ENCODE measurements at regions of chr11 and their contacts with region 1.

Region 1: DNA sequence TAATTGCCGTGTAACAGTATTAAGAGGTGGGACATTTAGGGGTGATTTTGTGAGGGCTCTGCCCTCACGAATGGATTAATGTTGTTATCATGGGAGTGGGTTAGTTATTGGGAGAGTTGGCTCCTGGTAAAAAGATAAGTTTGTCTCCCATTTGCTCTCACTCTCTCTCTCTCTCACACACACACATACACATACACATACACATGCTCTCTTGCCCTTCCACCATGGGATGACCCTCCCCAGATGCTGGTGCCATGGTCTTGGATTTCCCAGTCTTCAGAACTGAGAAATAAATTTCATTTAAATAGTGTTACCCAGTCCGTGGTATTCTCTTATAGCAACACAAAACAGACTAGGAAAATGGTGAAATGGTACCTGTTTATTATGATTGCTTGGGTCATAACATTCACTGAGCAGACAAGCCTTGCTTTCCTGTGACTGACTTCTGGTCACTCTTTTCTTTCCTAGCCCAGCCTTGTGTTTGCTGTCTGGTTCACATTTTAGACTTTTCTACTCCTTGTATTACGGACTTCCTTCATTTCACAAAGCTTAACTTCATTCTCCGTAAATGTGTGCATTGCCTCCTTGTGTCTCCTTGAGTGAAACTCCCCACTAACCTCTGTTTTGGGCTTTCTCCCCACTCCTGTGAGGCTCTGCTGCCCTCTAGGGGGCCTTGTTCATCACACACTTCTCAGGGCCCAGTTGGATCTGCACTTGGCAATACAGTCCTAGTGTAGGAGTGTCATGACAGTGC is 206.5 kb upstream of the CTSC start:
- DNase-seq: peak; percentile 63 to 86
- H3K4me3 ChIP-seq: no peak overlapping the region
- H3K27ac ChIP-seq: no peak overlapping the region
- H3K4me1 ChIP-seq: peaks cover 0 to 3% (median 0%) of the 10 kb centered on the region in 4 experiments; a peak in 2 of 7 replicates
- H3K27me3 ChIP-seq: no peaks in the 10 kb centered on the region
- CTCF ChIP-seq: peak; percentile 78 to 99 (median 98)
- EP300 ChIP-seq: no peak
- POLR2A ChIP-seq: no peak
- RAD21 ChIP-seq: peak; percentile 100

Region 2: DNA sequence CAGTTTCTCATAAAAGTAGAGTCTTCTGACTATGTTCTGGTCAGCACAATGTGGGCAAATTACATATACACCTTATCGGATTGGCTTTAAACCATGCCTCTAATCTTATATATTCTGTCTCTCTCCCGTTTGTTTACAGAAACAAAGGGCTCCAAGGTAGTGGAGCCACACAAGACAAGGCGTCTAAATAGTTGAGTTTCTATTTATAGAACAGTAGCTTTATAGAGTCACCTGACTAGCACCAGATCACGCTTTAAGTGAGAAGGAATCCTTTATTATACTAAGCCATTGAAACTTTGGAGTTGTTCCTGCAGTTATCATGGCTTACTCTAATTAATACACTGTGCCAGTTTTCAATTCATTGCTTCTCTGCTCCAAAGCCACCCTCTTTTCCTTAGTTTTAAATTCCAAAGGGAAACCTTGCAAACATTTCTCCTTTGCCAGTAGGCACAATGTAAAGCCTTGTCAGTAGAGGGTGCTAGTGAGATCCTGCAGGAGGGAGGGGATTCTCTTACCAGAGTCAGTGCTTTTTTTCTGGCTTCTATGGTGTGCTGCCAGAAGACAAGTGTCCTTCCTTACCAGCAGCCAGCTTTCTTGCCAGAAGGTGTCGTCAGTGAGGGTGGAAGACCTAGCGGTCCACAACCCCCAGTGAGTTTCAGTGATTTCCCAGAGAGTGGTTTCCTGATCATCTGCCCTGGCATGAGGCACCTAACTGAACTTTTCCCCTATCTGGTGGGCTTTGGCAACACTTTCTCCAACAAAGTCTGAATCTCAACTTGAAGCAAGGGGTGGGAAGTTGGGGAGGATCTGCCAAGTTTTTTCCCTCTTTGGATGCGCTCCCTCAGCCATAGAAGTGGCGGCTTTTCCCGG is 440.5 kb before region 1 on chr11:
- CTCF ChIA-PET with region 1: interaction called, 23 read pairs
- POLR2A ChIA-PET with region 1: no interaction called
- DNase-seq: peak; percentile 63 to 65
- H3K4me3 ChIP-seq: no peak overlapping the region
- H3K27ac ChIP-seq: no peak overlapping the region
- H3K4me1 ChIP-seq: peaks cover 0 to 5% (median 0%) of the 10 kb centered on the region in 4 experiments; a peak in 2 of 7 replicates
- H3K27me3 ChIP-seq: no peaks in the 10 kb centered on the region
- CTCF ChIP-seq: peak; percentile 71 to 99 (median 95)
- EP300 ChIP-seq: no peak
- POLR2A ChIP-seq: no peak
- RAD21 ChIP-seq: peak; percentile 82 to 83

Region 3: GRCh38 chr11:88320149-88320559 is 223.9 kb before region 1 on chr11:
- CTCF ChIA-PET with region 1: no interaction called
- POLR2A ChIA-PET with region 1: no interaction called
- DNase-seq: no peak
- H3K4me3 ChIP-seq: no peak overlapping the region
- H3K27ac ChIP-seq: no peak overlapping the region
- H3K4me1 ChIP-seq: peaks cover 0 to 9% (median 2%) of the 10 kb centered on the region in 4 experiments; a peak in 3 of 7 replicates
- H3K27me3 ChIP-seq: no peaks in the 10 kb centered on the region
- CTCF ChIP-seq: no peak
- EP300 ChIP-seq: no peak
- POLR2A ChIP-seq: no peak
- RAD21 ChIP-seq: no peak

Measured in H1 (cell line).